ENCODE measurements at regions of chr6 and their contacts with region 1.

Region 1: GRCh38 chr6:166950443-166950821 is 5.9 kb downstream of the RNASET2 start:
- DNase-seq: no peak
- H3K4me3 Mint-ChIP-seq: peak overlapping the region; percentile 78
- H3K27ac Mint-ChIP-seq: peak overlapping the region; percentile 89
- H3K4me1 Mint-ChIP-seq: peaks cover 54% of the 10 kb centered on the region
- H3K27me3 Mint-ChIP-seq: no peaks in the 10 kb centered on the region

Region 2: DNA sequence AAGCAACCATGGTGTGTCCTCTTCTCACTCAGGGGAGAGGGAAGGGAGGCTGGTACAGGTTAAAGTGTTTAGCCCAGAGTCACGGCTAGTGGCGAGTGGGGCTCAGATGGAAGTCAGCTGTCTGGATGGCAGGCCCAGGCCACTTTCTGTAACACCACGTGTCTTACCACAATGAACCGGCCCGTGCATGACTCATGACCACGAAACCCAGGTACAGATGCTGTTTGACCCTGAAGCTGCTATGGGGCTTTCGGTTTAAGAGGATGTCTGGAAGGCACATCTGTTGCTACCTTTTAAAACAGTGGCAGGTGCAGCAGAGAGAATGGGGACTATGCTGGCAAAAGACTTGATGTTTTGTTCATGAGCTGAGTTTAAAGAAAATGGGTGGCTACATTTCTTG is 531.1 kb before region 1 on chr6:
- intact Hi-C with region 1: loop called (anchors 5 kb)
- DNase-seq: peak; percentile 61
- H3K4me3 Mint-ChIP-seq: no peak overlapping the region
- H3K27ac Mint-ChIP-seq: no peak overlapping the region
- H3K4me1 Mint-ChIP-seq: peaks cover 62% of the 10 kb centered on the region
- H3K27me3 Mint-ChIP-seq: peaks cover 4% of the 10 kb centered on the region

Region 3: DNA sequence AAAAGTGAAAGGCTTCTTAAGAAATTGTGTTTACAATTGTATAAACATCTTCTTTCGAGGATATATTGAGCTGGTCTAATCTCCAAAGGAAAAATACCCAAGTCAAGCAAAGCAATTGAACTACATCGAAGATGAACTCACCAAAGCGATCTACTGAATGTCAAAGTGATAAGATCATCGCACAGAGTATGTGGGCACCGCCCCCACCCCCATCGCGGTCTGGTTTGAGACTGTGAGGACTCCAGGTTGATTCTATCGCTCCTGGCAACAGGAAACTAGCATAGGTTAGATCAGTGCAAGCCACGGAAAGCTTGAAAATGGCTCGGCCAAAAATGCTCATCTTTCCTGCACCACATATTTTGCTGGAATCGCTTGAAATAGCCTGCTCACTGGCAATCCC is 190.1 kb before region 1 on chr6:
- intact Hi-C with region 1: loop called (anchors 1 kb)
- DNase-seq: peak; percentile 31
- H3K4me3 Mint-ChIP-seq: no peak overlapping the region
- H3K27ac Mint-ChIP-seq: no peak overlapping the region
- H3K4me1 Mint-ChIP-seq: peaks cover 23% of the 10 kb centered on the region
- H3K27me3 Mint-ChIP-seq: peaks cover 38% of the 10 kb centered on the region

Region 4: GRCh38 chr6:166862287-166862977 is 88.0 kb before region 1 on chr6:
- intact Hi-C with region 1: loop called (anchors 5 kb)
- DNase-seq: peak; percentile 9
- H3K4me3 Mint-ChIP-seq: peak overlapping the region; percentile 80
- H3K27ac Mint-ChIP-seq: no peak overlapping the region
- H3K4me1 Mint-ChIP-seq: peaks cover 7% of the 10 kb centered on the region
- H3K27me3 Mint-ChIP-seq: peaks cover 34% of the 10 kb centered on the region

Region 5: DNA sequence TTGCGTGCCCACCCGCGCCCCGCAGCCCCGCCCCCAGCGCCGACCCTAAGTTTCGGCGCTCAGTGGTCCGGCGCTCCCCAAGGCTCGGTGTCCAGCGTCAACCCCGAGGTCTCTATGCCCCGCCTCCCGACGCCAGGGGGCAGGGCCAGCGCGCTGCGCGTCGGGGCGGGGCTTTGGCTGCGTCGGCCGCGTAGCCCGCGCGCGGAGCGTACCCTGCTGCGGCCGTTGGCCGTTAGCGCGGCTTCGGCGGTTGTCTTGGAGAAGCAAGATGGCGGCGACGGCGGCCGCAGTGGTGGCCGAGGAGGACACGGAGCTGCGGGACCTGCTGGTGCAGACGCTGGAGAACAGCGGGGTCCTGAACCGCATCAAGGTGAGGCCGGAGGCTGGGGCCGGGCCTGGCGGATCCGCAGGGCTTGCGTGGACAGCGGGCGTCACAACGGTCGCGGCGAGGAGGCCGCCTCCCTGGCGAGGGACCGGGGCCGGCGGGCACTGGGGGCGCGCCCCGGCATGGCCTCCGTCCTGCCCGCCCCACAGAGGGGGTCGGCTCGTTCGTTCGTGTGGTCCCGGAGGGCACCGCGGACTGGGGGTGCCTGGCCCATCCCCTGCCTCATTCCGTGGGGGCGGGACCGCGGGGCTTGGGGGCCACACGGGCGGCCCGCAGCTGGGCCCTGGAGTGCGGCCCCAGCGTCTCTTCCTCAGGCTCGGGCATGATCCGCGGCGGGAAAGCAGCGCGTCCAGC is 48.9 kb after region 1 on chr6 and contains the start of gene CEP43:
- intact Hi-C with region 1: loop called (anchors 1 kb)
- DNase-seq: peak; percentile 88
- H3K4me3 Mint-ChIP-seq: peak within 1 kb of the TSS; percentile 90
- H3K27ac Mint-ChIP-seq: peak within 1 kb of the TSS; percentile 80
- H3K4me1 Mint-ChIP-seq: peaks cover 31% of the 10 kb centered on the region
- H3K27me3 Mint-ChIP-seq: no peaks in the 10 kb centered on the region
- total RNA-seq, gene CEP43: 18.8 and 21.4 TPM in 2 replicates

Region 6: DNA sequence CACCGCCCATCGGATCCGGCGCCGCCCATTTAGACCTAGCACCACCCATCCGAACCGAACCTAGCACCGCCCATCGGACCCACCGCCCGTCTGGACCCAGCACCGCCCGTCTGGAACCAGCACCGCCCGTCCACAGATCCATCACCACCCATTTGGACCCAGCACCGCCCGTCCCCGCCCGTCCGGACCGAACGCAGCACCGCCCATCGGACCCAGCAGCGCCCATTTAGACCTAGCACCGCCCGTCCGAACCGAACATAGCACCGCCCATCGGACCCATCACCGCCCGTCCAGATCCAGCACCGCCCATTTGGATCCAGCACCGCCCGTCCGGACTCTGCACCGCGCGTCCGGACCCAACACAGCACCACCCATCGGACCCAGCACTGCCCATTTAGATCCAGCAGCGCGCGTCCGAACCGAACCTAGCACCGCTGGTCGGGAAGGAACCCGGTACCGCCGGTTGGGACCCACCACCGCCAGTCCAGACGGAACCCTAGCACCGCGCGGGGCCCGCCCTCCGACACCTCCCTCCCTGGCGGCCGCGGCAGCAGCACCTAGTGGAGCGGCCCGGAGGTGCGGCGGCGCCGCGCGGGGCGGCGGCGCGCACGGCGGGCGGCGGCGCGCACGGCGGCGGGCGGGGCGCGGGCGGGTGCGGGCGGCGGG is 875.9 kb after region 1 on chr6:
- intact Hi-C with region 1: loop called (anchors 5 kb)
- DNase-seq: peak; percentile 65
- H3K4me3 Mint-ChIP-seq: peak overlapping the region; percentile 89
- H3K27ac Mint-ChIP-seq: peak overlapping the region; percentile 61
- H3K4me1 Mint-ChIP-seq: peaks cover 52% of the 10 kb centered on the region
- H3K27me3 Mint-ChIP-seq: peaks cover 67% of the 10 kb centered on the region

Measured in activated T-helper 1 cell treated with anti-CD3 and anti-CD28 coated beads, Interleukin-12 subunit alpha, Interleukin-12 subunit beta, Interleukin-2, Interleukin-4 antibody, amounts not matched to agents 30 ng/mL and 10 ng/mL and 1 ng/mL, durations not matched to agents 14 hours and 24 hours and 36 hours (primary cell).